ENCODE measurements at regions of chr21 and their contacts with region 1.

Region 1: DNA sequence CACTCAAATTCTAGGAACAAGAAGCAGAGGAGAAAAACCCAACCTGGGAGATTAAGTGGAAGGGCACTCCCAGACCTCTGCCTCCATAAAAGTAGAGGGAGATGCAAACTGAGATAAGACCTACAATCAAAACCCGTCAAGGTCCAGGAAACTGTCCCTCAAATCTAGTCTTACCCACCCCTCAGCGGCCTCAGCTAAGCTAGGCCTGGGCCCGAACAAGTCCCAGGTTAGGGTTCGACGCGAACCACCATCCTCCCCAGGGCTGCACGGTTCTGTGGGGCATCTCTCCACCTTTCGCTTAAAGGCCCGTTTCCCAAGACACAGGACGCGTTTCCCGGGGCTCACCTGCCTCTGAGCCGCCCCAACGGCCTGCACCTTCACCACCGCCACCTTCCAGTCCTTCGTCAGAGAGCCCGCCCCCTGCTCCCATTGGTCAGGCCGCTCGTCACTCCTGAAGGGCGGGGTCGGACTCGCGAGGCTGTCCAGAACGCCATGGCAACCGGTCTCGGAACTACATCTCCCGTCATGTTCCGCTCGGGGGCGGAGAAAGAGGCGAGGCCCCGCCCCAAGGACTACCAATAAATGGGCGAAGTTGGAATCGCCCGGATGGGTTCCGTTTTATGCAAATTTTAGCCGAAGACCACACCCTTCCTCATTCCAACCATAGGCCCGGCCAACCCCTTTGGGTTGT is at the start of gene CRYZL1:
- DNase-seq: peak; percentile 100
- H3K4me3 ChIP-seq: peak within 1 kb of the TSS; percentile 85 to 91
- H3K27ac ChIP-seq: peak within 1 kb of the TSS; percentile 90
- H3K4me1 ChIP-seq: peaks cover 48% of the 10 kb centered on the region
- H3K27me3 ChIP-seq: no peaks in the 10 kb centered on the region
- CTCF ChIP-seq: no peak
- POLR2A ChIP-seq: peak in 1 of 2 donors; percentile 47
- total RNA-seq, gene CRYZL1: 56.2 TPM

Region 2: GRCh38 chr21:33552999-33553598 is 88.4 kb before region 1 on chr21:
- intact Hi-C with region 1: no loop called
- DNase-seq: no peak
- H3K4me3 ChIP-seq: no peak overlapping the region
- H3K27ac ChIP-seq: no peak overlapping the region
- H3K4me1 ChIP-seq: peaks cover 26% of the 10 kb centered on the region
- H3K27me3 ChIP-seq: no peaks in the 10 kb centered on the region
- CTCF ChIP-seq: no peak
- POLR2A ChIP-seq: no peak

Region 3: GRCh38 chr21:33801424-33802420 is 160.2 kb after region 1 on chr21:
- intact Hi-C with region 1: loop called (anchors 10 kb)
- DNase-seq: no peak
- H3K4me3 ChIP-seq: no peak overlapping the region
- H3K27ac ChIP-seq: peak overlapping the region; percentile 42
- H3K4me1 ChIP-seq: peaks cover 24% of the 10 kb centered on the region
- H3K27me3 ChIP-seq: no peaks in the 10 kb centered on the region
- CTCF ChIP-seq: no peak
- POLR2A ChIP-seq: no peak

Region 4: DNA sequence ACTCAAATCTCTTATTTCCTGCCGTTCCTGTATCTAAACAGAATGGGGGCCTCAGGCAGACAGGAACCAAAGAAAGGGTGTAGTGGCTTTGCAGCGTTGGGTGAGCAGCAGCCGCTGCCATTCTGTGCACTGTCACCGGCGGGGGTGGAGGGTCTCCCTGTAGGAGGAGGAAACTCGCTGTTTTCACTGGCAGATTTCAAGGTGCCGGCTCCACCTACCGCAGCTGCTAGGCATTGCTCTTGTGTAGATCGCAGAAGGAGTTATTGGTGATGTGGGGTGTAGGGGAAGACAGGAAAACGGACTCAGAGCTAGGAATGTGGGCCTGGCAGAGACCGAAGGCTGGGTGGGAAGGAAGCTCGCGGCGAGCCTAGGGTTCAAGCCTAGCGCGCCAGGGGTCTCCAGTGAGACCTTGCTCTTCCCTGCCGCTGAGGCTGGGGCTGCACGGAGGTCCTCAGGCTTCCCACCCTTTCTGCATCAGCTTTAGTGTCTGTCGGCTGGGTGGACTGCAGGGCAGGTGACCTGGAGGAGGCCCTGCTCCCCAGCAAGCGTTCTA is 253.3 kb after region 1 on chr21:
- intact Hi-C with region 1: loop called (anchors 10 kb)
- DNase-seq: no peak
- H3K4me3 ChIP-seq: peak overlapping the region; percentile 12 to 43
- H3K27ac ChIP-seq: no peak overlapping the region
- H3K4me1 ChIP-seq: peaks cover 14% of the 10 kb centered on the region
- H3K27me3 ChIP-seq: no peaks in the 10 kb centered on the region
- CTCF ChIP-seq: peak in 2 of 3 experiments; percentile 64 to 86
- POLR2A ChIP-seq: no peak

Measured in vagina (tissue), 2 donors.